ENCODE measurements at regions of chr2 and their contacts with region 1.

Region 1: GRCh38 chr2:202870431-202871299 is 901 bp downstream of the ICA1L start:
- DNase-seq: peak; percentile 56 to 76
- H3K4me3 ChIP-seq: peak overlapping the region; percentile 69 to 90
- H3K27ac ChIP-seq: peak overlapping the region; percentile 73 to 83
- H3K4me1 ChIP-seq: peaks cover 0 to 7% (median 3%) of the 10 kb centered on the region in 4 donors
- H3K27me3 ChIP-seq: no peaks in the 10 kb centered on the region
- CTCF ChIP-seq: peak; percentile 14 to 26

Region 2: DNA sequence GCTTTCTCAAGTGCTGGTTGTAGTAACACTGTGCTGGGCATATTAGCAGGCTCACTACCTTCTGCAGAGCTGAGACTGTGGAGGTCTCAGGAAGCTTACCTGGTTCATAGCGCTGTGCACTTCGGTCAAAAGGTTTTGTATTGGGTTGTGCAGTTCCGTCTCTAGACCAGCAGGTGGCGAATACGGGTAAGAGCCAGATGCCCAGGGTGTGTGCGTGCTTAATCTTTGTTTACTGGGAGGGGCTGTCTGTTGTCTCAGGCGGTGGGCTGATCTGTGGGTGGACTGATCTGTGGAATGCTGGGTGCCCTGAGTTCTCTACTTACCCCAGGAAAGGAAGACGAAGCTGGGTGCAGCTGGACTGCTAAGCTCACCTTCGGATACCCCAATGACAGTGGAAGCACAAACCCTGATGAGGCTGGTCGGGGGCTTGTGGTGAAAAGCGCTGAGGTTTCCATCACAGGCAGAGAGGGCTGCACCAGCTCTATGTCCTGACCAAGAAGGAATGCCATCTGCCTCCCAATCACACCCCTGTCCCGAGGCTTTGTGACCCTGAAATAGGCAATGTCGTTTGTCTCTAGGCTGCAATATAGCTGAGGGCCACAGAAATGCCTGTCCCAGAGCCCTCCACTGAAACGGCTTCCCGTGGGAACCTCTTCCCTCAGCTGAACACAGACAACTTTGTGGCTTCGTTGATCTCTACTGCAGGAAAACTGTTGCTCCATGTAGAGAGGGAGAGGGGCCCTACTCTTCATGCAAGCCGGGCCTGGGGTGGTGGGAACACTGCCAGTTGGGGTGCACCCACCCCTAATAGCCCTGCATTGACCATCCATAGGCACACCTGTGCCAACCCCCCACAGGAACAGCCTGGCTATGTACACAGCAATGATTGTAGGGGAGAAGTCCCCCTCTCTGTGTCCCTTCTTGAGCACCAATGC is 281.8 kb before region 1 on chr2:
- intact Hi-C with region 1: loop called (anchors 2 kb)
- DNase-seq: peak; percentile 60 to 73
- H3K4me3 ChIP-seq: peak overlapping the region in 1 of 2 donors; percentile 40
- H3K27ac ChIP-seq: no peak overlapping the region
- H3K4me1 ChIP-seq: peaks cover 0 to 11% (median 7%) of the 10 kb centered on the region in 4 donors
- H3K27me3 ChIP-seq: no peaks in the 10 kb centered on the region
- CTCF ChIP-seq: peak; percentile 92 to 93

Measured in tibial artery (tissue), 4 donors.